Cardiac septum (tissue), 1 donor: ENCODE measurements at regions of chr19 and their contacts with region 1.

Region 1: DNA sequence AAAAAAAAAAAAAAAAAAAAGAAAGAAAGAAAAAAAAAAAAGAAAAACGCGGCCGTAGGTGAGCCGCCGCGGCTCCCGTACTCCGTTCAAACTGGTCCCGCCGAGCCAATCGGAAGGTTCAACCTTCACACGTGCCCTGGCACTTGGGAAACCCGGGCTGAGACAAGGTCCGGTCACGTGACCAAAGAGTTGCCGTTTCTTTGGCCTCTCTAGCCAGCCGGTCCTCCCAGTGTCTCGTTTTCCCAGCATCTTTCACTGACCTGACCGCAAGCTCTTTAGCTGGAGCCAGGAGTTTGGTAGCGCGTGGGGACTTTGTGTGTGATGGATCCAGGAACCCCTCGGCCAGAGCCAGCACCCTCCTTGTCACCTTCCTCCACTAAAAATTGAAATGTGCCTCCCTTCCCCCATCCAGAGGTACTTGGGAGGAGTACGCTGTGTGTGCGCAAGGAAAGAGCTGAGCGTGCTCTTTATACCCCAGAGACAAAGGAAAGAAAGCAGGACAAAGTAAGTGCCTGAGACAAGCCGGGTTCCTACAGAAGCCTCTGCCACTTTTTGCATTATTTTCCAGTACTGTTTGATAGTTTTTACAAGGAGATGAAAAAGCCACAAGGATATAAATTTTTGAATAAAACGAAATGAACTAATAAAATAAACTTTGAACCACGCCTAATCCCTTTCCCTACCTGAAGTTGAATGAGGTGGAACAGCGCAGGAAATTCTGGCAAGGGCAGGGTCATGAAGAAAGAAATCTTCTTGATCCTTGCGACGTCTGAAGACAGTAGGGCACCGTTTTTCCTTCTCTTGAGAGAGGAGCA is 959 bp downstream of the TNPO2 start:
- DNase-seq: peak; percentile 98

Region 2: GRCh38 chr19:12217332-12217731 is 505.4 kb before region 1 on chr19:
- intact Hi-C with region 1: no loop called
- DNase-seq: no peak

Region 3: GRCh38 chr19:12647490-12648071 is 75.2 kb before region 1 on chr19:
- intact Hi-C with region 1: no loop called
- DNase-seq: peak; percentile 88

Region 4: DNA sequence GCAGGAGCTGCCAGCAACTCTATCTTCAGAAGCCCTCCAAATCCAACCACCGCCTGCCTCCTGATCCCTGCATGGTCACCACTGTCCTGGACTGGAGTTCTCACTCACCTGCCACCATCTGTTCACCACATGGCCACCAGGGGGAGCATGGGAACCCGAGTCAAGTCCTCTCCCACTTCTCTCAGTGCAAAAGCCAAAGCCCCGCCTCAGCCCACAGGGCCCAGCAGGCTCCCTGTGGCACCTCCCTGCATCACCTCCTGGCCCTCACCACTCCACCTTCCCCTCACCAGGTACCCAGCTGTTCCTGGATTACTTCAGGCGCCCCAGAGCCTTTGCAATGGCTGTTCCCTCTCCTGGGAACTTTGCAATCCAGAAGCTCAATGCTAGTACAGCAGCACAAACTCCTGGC is 46.4 kb before region 1 on chr19:
- intact Hi-C with region 1: no loop called
- DNase-seq: peak; percentile 92

Region 5: GRCh38 chr19:12689581-12690216 is 33.1 kb before region 1 on chr19:
- intact Hi-C with region 1: no loop called
- DNase-seq: no peak

Region 6: GRCh38 chr19:12733369-12734176 is 10.8 kb after region 1 on chr19:
- intact Hi-C with region 1: loop called (anchors 1 kb)
- DNase-seq: no peak

Region 7: DNA sequence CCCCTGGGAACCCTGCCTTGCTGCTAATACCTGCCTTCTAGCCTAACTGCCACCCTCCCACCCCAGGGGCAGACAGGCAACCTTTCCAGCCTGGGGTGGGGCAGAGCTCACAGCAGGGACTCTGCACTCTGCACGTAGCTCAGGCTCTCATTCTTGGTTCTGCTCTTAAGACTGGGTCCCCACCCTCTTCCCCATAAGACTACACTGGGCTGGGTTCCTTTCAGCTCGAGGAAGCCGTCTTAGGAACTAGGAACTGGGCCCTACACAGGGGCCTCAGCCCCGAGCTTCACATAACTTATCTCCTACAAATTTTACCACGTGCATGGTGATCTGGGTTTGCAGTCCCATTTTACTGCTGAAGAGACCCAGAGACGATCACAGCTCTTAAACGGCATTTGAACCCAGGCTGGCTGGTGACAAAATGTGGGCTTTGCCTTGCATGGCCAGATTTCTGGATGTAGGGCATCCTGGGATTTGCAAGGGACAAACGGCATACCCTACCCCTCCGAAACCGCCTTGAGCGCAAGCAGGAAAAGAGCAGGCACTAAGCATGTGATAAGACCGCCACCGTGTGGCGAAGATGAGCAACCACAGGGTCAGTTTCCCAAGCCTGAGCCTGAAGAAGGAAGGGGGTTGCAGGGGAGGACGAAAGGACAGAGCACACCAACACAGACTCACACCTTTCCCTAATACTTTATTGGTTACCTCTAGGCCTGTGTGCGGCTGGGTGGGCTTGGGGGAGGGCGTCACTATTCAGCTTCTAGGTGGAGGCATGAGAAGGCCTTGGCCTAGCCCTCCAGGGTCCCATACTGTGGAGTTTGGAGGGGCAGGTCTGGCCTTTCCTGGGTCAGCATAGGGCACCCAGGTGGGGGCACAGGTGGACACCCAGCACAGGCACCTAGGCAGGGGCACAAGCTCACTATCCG is 73.6 kb after region 1 on chr19:
- intact Hi-C with region 1: loop called (anchors 5 kb)
- DNase-seq: peak; percentile 94